GM12878 (cell line): ENCODE measurements at regions of chr7 and their contacts with region 1.

Region 1: DNA sequence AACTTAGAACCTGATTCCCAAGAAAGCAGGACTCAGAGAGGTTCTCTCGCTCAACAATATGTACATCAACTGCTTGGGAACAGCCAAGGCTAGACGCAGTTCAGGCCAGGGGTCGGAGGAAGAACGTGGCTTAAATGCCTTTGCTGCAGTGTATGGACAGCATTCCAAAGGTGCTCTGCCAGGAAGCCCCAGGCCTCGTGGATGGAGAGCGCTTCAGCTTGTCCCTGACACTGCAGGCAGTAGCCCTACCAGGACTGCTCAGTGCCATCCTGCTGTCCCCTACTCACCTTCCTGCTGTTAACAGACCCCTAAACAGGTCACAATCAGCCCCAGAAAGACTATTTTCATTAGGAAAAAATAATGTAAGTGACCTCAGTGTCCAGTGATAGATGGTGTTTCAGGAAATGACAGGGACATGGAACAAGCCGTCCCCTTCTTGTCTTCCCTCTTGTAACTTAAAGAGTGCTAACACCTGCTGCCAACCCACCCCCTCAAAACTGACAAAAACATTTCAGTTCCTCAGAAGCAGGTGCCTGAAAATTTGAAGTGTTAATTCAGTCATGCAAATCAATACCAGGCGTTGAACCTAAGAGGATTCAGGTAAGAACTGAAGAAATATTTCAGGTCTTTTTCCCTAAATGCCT is 16.5 kb downstream of the CREB3L2 start:
- DNase-seq: peak; percentile 69
- ATAC-seq: peak; percentile 58
- H3K4me3 ChIP-seq: peak overlapping the region; percentile 4; the same call in 1 of the 2 replicates
- H3K27ac ChIP-seq: peak overlapping the region; percentile 95
- H3K4me1 ChIP-seq: peaks cover 87% of the 10 kb centered on the region
- H3K27me3 ChIP-seq: no peaks in the 10 kb centered on the region
- CTCF ChIP-seq: no peak
- EP300 ChIP-seq: peak; percentile 83 to 90; a peak in 3 of 4 replicates
- POLR2A ChIP-seq: peak; percentile 41; the same call in 1 of the 2 replicates
- RAD21 ChIP-seq: no peak

Region 2: DNA sequence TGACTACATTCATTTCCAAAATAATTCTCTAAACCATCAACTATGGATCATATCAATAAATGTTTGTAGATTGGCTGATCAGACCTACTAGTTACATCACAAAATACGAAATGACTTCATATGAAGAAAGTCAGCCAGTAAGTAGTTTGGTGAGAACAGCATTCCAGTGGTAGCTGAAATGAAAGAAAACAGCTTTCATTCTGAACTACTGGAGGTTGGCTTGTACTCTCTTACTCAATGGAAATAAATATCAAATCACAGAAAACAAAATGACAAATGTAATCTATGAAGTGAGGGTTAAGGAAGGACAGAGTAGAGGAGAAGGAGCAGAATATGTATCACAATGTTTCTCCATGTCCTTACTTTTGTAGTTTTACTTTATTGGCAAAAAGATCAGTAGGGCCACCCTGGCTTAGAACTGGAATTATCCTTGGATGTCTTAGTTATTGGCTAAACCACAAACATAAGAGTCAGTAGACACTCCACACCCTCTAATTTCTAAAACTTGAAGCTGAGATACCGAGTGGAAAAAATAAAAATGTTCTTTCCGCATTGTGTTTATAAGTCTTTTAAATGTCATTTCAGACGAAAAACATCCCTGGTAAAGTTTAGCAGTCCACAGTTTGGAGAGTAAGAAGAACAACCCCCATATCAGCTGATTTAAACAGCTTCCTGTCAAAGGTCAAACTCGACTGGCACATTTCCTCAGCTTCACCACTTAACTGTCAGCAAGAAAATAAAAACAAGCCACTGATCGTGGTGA is 64.6 kb before region 1 on chr7:
- CTCF ChIA-PET with region 1: interaction called, 704 read pairs
- POLR2A ChIA-PET with region 1: interaction called, 5 read pairs
- RAD21 ChIA-PET with region 1: interaction called, 3 read pairs
- SMC1A ChIA-PET with region 1: interaction called, 18 read pairs
- in situ Hi-C with region 1: no loop called
- intact Hi-C with region 1: no loop called
- DNase-seq: no peak
- ATAC-seq: no peak
- H3K4me3 ChIP-seq: no peak overlapping the region
- H3K27ac ChIP-seq: no peak overlapping the region
- H3K4me1 ChIP-seq: peaks cover 30% of the 10 kb centered on the region
- H3K27me3 ChIP-seq: no peaks in the 10 kb centered on the region
- CTCF ChIP-seq: no peak
- EP300 ChIP-seq: no peak
- POLR2A ChIP-seq: no peak
- RAD21 ChIP-seq: no peak